ENCODE measurements at regions of chr7 and their contacts with region 1.

Region 1: GRCh38 chr7:31443457-31443856 is 70.4 kb upstream of the ITPRID1 start:
- DNase-seq: no peak
- ATAC-seq: peak in 1 of 4 donors; percentile 61
- H3K4me3 ChIP-seq: no peak overlapping the region
- H3K27ac ChIP-seq: no peak overlapping the region
- H3K4me1 ChIP-seq: no peaks in the 10 kb centered on the region
- H3K27me3 ChIP-seq: peaks cover 0 to 4% (median 0%) of the 10 kb centered on the region in 3 donors
- CTCF ChIP-seq: peak; percentile 62

Region 2: GRCh38 chr7:31583942-31584341 is 140.5 kb after region 1 on chr7:
- intact Hi-C with region 1: no loop called
- DNase-seq: no peak
- ATAC-seq: no peak
- H3K4me3 ChIP-seq: no peak overlapping the region
- H3K27ac ChIP-seq: no peak overlapping the region
- H3K4me1 ChIP-seq: no peaks in the 10 kb centered on the region
- H3K27me3 ChIP-seq: no peaks in the 10 kb centered on the region
- CTCF ChIP-seq: no peak

Region 3: GRCh38 chr7:31633894-31634494 is 190.5 kb after region 1 on chr7:
- intact Hi-C with region 1: loop called (anchors 2 to 5 kb)
- DNase-seq: peak in 1 of 2 donors; percentile 12
- ATAC-seq: peak; percentile 67 to 90 (median 72)
- H3K4me3 ChIP-seq: no peak overlapping the region
- H3K27ac ChIP-seq: no peak overlapping the region
- H3K4me1 ChIP-seq: no peaks in the 10 kb centered on the region
- H3K27me3 ChIP-seq: no peaks in the 10 kb centered on the region
- CTCF ChIP-seq: peak; percentile 55

Region 4: GRCh38 chr7:31735991-31736982 is 292.8 kb after region 1 on chr7:
- intact Hi-C with region 1: loop called in 1 of 2 experiments (anchors 10 kb)
- DNase-seq: peak in 1 of 2 donors; percentile 30
- ATAC-seq: peak in 3 of 4 donors; percentile 57 to 65 (median 58)
- H3K4me3 ChIP-seq: no peak overlapping the region
- H3K27ac ChIP-seq: no peak overlapping the region
- H3K4me1 ChIP-seq: no peaks in the 10 kb centered on the region
- H3K27me3 ChIP-seq: peaks cover 0 to 6% (median 3%) of the 10 kb centered on the region in 3 donors
- CTCF ChIP-seq: peak; percentile 63

Region 5: DNA sequence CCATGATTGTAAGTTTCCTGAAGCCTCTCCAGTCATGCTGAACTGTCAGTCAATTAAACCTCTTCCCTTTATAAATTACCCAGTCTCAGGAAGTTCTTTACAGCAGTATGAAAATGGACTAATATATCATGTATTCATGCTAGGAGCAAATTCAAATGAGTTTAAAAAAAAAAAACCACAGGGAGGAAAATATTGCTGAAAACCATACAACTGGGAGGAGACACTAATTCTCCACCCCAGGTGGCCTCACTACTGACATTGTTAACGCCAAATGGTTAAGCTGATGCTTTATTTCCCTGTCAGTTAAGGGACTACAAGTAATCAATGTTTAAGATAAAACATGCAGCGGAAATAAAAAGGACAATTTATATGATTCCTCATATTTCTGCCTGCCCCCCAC is 571.7 kb after region 1 on chr7:
- intact Hi-C with region 1: no loop called
- DNase-seq: no peak
- ATAC-seq: no peak
- H3K4me3 ChIP-seq: no peak overlapping the region
- H3K27ac ChIP-seq: no peak overlapping the region
- H3K4me1 ChIP-seq: no peaks in the 10 kb centered on the region
- H3K27me3 ChIP-seq: no peaks in the 10 kb centered on the region
- CTCF ChIP-seq: no peak